Adrenal gland (tissue), 19 donors: ENCODE measurements at regions of chr14 and their contacts with region 1.

Region 1: GRCh38 chr14:23068476-23069412 is 11.4 kb upstream of the CDH24 start:
- DNase-seq: peak; percentile 85 to 95 (median 87)
- H3K4me3 ChIP-seq: no peak overlapping the region
- H3K27ac ChIP-seq: peak overlapping the region in 3 of 5 donors; percentile 18 to 67 (median 66)
- H3K4me1 ChIP-seq: peaks cover 21 to 48% of the 10 kb centered on the region in 2 donors
- H3K27me3 ChIP-seq: no peaks in the 10 kb centered on the region
- CTCF ChIP-seq: peak; percentile 98 to 100 (median 99)
- POLR2A ChIP-seq: no peak

Region 2: DNA sequence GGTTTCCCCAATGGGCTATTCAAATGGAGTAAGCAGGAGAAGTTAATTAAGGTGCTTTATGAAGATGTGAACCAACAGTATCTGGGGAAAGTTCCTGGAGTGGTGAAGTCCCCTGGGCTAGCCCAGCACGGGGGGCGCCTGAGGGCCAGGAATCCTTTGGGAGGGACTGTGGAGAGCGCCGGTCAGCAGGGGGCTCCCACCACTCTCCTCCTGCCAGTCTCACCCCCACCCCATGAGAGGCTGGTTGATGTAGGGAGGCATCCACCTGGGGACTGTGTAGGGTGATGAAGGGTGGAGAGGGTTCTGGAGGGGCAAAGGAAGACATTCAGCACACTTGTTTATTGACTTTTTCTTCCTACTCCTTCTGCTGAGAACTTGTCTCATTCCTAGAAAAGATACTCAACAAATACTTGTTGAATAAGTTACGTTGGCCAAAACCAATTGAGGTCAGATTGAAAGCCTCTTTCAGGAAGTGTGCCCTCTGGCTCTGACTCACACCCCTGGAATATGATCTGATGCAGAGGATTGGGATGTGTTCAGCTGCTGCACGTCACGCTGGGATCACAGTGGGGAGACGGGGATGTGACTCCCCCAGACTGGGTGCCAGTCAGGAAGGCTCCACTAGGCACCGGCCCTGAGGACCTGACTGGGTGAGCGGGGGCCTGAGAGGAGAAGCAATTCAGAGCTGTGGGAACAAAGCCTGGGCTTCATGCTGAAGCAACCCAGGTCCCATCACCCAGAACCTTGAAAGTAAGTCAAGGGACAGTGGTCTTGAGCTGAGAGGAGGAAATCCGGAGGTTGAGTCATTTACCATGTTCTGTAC is 46.1 kb after region 1 on chr14:
- intact Hi-C with region 1: loop called in 1 of 2 experiments (anchors 5 kb)
- DNase-seq: peak in 6 of 7 donors; percentile 76 to 82 (median 78)
- H3K4me3 ChIP-seq: no peak overlapping the region
- H3K27ac ChIP-seq: peak overlapping the region in 1 of 5 donors; percentile 65
- H3K4me1 ChIP-seq: peaks cover 0 to 7% of the 10 kb centered on the region in 2 donors
- H3K27me3 ChIP-seq: no peaks in the 10 kb centered on the region
- CTCF ChIP-seq: no peak
- POLR2A ChIP-seq: peak in 1 of 2 donors; percentile 26